Ascending aorta (tissue), 2 donors: ENCODE measurements at regions of chr10 and their contacts with region 1.

Region 1: DNA sequence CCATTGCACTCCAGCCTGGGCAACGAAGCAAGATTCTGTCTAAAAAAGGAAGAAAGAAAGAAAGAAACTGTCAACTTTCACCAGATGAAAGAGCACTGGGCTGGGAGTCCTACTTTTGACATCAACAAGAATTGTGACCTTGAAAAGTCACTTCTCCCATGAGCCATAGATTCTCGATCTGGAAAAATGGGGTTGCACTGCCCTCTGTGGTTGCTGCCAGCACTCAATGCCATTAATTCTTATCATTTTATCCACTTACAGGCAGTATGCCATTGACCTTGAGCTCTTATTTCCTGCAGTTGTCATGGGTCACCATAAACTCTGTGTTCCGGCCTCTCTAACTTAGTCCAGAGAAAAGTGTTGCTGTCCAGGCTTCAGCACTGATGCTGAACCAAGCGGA is 137.2 kb downstream of the NOC3L start:
- DNase-seq: no peak
- H3K4me3 ChIP-seq: no peak overlapping the region
- H3K27ac ChIP-seq: peak overlapping the region; percentile 49 to 57
- H3K4me1 ChIP-seq: peaks cover 0 to 29% of the 10 kb centered on the region in 2 donors
- H3K27me3 ChIP-seq: no peaks in the 10 kb centered on the region
- CTCF ChIP-seq: peak in 1 of 3 experiments; percentile 44

Region 2: GRCh38 chr10:93139059-93139655 is 1086.4 kb before region 1 on chr10:
- intact Hi-C with region 1: no loop called
- DNase-seq: no peak
- H3K4me3 ChIP-seq: no peak overlapping the region
- H3K27ac ChIP-seq: no peak overlapping the region
- H3K4me1 ChIP-seq: no peaks in the 10 kb centered on the region
- H3K27me3 ChIP-seq: no peaks in the 10 kb centered on the region
- CTCF ChIP-seq: no peak

Region 3: GRCh38 chr10:93916257-93917063 is 309.1 kb before region 1 on chr10:
- intact Hi-C with region 1: loop called (anchors 10 kb)
- DNase-seq: no peak
- H3K4me3 ChIP-seq: peak overlapping the region; percentile 11 to 18
- H3K27ac ChIP-seq: no peak overlapping the region
- H3K4me1 ChIP-seq: no peaks in the 10 kb centered on the region
- H3K27me3 ChIP-seq: no peaks in the 10 kb centered on the region
- CTCF ChIP-seq: peak; percentile 20 to 59 (median 53)

Region 4: GRCh38 chr10:94076321-94076841 is 149.2 kb before region 1 on chr10:
- intact Hi-C with region 1: loop called (anchors 2 kb)
- DNase-seq: no peak
- H3K4me3 ChIP-seq: peak overlapping the region in 1 of 2 donors; percentile 26
- H3K27ac ChIP-seq: no peak overlapping the region
- H3K4me1 ChIP-seq: peaks cover 0 to 4% of the 10 kb centered on the region in 2 donors
- H3K27me3 ChIP-seq: no peaks in the 10 kb centered on the region
- CTCF ChIP-seq: peak; percentile 49 to 74 (median 49)